Motor neuron (in vitro differentiated cells): ENCODE measurements at regions of chr6 and their contacts with region 1.

Region 1: DNA sequence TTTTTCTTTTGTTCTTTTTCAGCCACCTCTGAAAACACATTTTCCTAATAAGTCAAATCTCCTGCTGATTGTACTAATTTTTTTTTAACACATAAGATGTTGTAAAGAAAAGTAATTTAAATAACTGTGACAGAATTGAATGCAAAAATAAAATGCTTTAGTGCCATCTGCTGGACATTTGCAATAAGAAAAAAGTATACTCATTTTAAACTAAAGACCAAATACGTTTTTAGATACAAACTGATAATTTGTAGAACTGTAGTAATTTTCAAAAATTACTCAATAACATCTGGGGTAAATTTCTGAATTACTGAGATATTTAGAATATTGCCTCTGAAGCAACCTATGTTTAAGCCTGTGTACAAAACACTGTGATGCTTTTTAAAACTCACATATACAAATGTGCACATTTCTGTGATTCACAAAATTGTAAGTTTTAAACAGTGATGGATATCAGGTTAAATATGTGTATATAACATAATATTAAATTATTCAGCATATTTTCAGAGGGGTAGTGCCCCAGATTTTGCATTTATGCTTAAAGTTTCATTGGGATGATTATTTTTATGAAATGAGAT is 198.7 kb downstream of the RIMS1 start:
- ATAC-seq: no peak
- H3K4me3 ChIP-seq: no peak overlapping the region
- H3K27ac ChIP-seq: no peak overlapping the region
- H3K4me1 ChIP-seq: peaks cover 0 to 3% of the 10 kb centered on the region in 2 donors

Region 2: GRCh38 chr6:71383901-71384489 is 701.1 kb before region 1 on chr6:
- in situ Hi-C with region 1: loop called in 1 of 9 experiments (anchors 25 kb)
- ATAC-seq: peak in 3 of 8 experiments; percentile 47 to 76 (median 75)
- H3K4me3 ChIP-seq: no peak overlapping the region
- H3K27ac ChIP-seq: no peak overlapping the region
- H3K4me1 ChIP-seq: no peaks in the 10 kb centered on the region

Region 3: DNA sequence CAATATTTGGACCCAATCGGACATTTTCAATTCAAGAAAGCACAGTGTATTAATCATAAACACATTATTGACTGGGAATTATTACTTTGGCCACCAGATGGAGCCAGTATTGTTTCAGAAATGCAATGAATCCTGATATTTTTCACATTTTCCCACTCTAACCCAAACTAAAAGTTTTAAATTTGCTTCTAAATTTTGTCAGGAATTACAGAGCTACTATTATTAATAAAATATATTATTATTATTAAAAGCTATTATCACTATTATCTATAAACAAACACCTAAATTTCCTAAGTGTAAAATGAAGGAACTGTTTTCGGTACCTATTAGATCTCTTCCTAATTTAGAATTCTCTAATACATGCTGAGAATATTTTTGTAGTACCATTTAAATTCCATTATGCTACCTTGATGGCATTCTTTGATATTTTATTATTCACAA is 551.1 kb before region 1 on chr6:
- in situ Hi-C with region 1: loop called in 4 of 9 experiments (anchors 25 kb)
- ATAC-seq: no peak
- H3K4me3 ChIP-seq: no peak overlapping the region
- H3K27ac ChIP-seq: no peak overlapping the region
- H3K4me1 ChIP-seq: peaks cover 4 to 12% of the 10 kb centered on the region in 2 donors

Region 4: GRCh38 chr6:71621918-71622519 is 463.1 kb before region 1 on chr6:
- in situ Hi-C with region 1: loop called in 2 of 9 experiments (anchors 25 kb)
- ATAC-seq: peak in 3 of 8 experiments; percentile 18 to 47 (median 42)
- H3K4me3 ChIP-seq: no peak overlapping the region
- H3K27ac ChIP-seq: no peak overlapping the region
- H3K4me1 ChIP-seq: no peaks in the 10 kb centered on the region

Region 5: DNA sequence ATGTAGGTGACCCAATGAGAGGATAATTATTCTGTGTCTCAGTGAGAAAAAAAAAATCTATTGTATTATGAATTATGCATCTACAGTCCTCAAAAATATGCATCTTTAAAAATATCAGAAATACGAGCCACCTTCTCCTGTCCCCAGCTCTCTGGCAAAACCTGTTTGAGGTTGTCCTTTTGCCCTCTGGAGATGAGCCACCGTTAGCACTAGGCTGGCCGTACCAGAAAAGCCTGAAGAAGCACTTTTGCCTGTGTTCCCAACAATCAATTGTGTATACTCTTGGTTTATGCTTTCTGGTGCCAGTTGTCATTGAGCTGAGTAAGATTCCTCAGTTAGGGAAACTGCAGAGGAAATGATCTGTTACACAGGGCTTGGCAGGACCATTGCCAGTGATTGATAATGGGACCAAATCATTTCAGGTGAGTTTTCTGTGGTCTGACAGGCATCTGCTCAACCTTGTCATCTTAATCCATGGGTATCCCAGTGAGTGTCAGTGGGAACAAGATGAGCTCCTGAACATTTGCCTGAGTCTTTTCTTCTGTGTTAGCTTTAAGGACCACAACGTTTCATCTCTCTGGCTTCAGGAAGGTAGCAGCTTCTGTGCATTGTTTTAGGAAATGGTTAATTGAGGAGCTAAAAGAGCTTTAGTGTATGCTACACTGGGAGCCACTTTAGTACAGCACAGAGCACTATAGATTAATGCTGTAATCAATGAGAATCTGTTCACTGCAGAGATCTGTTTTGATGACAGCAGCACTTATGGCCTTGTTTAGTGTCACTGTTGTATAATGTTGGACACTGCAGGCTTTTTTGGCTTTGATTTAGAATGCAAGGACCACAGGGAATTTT is 131.4 kb after region 1 on chr6:
- in situ Hi-C with region 1: no loop called
- ATAC-seq: peak in 5 of 8 experiments; percentile 43 to 68 (median 49)
- H3K4me3 ChIP-seq: no peak overlapping the region
- H3K27ac ChIP-seq: no peak overlapping the region
- H3K4me1 ChIP-seq: peaks cover 3 to 42% of the 10 kb centered on the region in 2 donors